ENCODE measurements at regions of chr5 and their contacts with region 1.

Region 1: DNA sequence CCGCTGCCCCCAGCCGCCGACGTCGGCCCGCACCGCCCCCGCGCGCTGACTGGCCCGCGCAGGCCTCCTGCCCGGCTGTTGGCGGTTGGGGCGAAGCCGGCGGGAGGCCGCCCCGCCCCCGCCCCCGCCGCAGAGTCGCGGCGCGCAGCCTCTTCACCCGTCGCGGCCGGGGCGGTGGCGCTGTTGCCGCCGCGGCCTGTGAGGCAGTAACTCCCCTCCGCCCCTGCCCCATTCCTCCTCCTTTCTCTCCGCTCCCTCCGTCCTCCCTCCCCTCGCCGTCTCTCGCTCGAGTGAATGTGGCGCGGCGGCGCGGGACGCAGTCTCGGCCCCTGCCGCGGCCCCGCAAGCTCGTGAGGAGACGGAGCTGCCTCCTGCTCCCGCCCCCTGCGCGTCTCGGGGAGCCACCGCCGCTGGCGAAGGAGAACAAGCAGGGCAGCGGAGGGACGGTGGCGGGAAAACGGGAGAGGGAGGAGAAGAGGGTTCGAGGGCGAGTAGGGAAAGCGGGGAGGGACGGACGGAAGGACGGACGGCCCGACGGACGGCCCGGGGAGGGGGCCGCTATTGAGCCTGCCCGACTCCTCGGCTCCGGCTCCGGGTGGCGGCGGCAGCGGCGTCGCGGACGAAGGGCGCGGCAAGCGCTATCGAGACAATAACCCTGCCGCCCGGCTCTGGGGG is 637 bp upstream of the ERBIN start:
- DNase-seq: peak; percentile 83 to 88 (median 84)
- H3K4me3 ChIP-seq: peak overlapping the region in 1 of 2 donors; percentile 80
- H3K4me3 Mint-ChIP-seq: peak overlapping the region; percentile 85 to 98 (median 91)
- H3K27ac ChIP-seq: peak overlapping the region; percentile 95
- H3K27ac Mint-ChIP-seq: peak overlapping the region; percentile 90 to 99 (median 95)
- H3K4me1 ChIP-seq: peaks cover 39% of the 10 kb centered on the region
- H3K4me1 Mint-ChIP-seq: peaks cover 15 to 62% (median 32%) of the 10 kb centered on the region in 4 donors
- H3K27me3 ChIP-seq: no peaks in the 10 kb centered on the region
- H3K27me3 Mint-ChIP-seq: no peaks in the 10 kb centered on the region

Region 2: DNA sequence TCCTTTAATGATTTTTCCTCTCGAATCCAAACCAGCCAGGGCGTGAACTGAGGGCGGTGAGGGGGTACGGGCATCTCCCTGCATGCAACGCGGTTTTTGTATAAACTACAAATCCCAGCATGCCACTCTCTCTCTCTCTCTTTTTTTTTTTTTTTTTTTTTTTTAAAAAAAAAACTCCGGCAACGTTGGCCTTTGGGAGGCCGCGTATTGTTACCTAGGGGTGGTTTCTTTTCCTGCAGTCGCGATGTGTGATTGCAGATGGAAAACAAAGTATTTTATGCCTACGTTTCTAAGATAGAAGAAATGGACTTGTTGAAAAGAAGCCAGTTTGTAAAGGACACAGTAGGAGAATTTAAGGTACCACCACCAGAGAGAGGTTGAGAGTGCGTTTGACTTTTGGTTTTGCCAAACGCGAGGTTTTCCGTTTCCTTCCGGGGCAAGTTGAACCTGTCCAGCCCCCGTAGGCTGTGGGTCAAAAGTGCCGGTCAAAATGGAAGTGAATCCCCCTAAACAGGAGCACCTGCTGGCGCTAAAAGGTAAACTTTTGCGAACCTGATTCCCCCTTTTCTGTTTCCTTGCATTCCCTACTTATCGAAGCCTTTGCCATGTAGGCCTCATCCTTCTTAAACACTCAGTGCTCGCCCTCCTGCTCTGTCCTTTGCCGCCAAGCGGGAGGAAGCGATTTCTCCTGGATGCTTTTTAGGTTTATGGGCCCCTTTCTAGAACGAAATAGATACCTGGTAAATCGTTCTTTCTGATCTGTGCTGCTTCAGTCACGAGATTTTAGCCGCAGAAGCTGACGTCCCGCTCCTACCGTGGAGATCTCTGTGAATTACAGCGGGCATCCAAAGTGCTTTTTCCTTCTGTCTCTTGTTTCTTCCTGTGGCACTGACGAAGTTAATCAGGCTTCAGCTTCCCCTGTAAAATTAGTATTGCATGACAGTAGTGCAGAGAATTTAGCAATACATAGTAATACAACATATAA is 300.9 kb before region 1 on chr5 and contains the starts of genes SHLD3 and TRAPPC13:
- CTCF ChIA-PET with region 1: no interaction called
- POLR2A ChIA-PET with region 1: interaction called, 6 read pairs
- intact Hi-C with region 1: loop called (anchors 1 kb)
- DNase-seq: peak; percentile 90 to 93 (median 92)
- H3K4me3 ChIP-seq: peak within 1 kb of the TSS; percentile 74 to 98
- H3K4me3 Mint-ChIP-seq: peak within 1 kb of the TSS; percentile 96 to 100 (median 99)
- H3K27ac ChIP-seq: peak within 1 kb of the TSS; percentile 79
- H3K27ac Mint-ChIP-seq: peak within 1 kb of the TSS; percentile 97 to 100 (median 99)
- H3K4me1 ChIP-seq: peaks cover 34% of the 10 kb centered on the region
- H3K4me1 Mint-ChIP-seq: peaks cover 28 to 68% (median 42%) of the 10 kb centered on the region in 4 donors
- H3K27me3 ChIP-seq: no peaks in the 10 kb centered on the region
- H3K27me3 Mint-ChIP-seq: peaks cover 2 to 3% of the 10 kb centered on the region in 2 donors
- total RNA-seq, gene SHLD3: 6.1 to 7.4 TPM
- total RNA-seq, gene TRAPPC13: 20.9 TPM

Region 3: GRCh38 chr5:65760504-65761275 is 165.0 kb before region 1 on chr5:
- CTCF ChIA-PET with region 1: interaction called, 12 read pairs
- POLR2A ChIA-PET with region 1: interaction called, 11 read pairs
- intact Hi-C with region 1: loop called (anchors 1 kb)
- DNase-seq: peak; percentile 63 to 74 (median 68)
- H3K4me3 ChIP-seq: no peak overlapping the region
- H3K4me3 Mint-ChIP-seq: no peak overlapping the region
- H3K27ac ChIP-seq: no peak overlapping the region
- H3K27ac Mint-ChIP-seq: peak overlapping the region in 3 of 7 donors; percentile 1 to 53 (median 24)
- H3K4me1 ChIP-seq: peaks cover 5% of the 10 kb centered on the region
- H3K4me1 Mint-ChIP-seq: peaks cover 3 to 12% (median 6%) of the 10 kb centered on the region in 4 donors
- H3K27me3 ChIP-seq: no peaks in the 10 kb centered on the region
- H3K27me3 Mint-ChIP-seq: no peaks in the 10 kb centered on the region

Region 4: DNA sequence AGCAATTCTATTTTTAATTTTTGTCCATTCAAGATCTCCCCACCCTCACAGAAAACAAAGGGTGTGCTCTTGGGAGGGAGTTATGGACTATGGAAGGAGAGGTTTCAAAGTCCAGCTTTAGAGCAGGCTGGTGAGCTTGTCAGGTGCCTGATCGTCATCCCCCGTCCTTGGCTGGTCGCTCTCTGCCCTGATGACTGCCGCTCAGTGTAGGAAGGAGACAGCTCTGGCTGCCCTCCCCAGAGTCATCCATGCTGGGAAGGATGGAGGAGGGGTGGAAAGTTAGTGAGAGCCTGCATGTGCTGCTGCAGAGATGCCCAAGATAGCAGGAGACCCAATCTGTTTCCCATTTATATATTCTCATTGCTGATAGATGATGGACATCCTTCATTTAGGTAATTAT is 107.1 kb before region 1 on chr5:
- CTCF ChIA-PET with region 1: no interaction called
- POLR2A ChIA-PET with region 1: no interaction called
- intact Hi-C with region 1: no loop called
- DNase-seq: no peak
- H3K4me3 ChIP-seq: no peak overlapping the region
- H3K4me3 Mint-ChIP-seq: no peak overlapping the region
- H3K27ac ChIP-seq: no peak overlapping the region
- H3K27ac Mint-ChIP-seq: no peak overlapping the region
- H3K4me1 ChIP-seq: no peaks in the 10 kb centered on the region
- H3K4me1 Mint-ChIP-seq: peaks cover 0 to 2% (median 0%) of the 10 kb centered on the region in 4 donors
- H3K27me3 ChIP-seq: no peaks in the 10 kb centered on the region
- H3K27me3 Mint-ChIP-seq: no peaks in the 10 kb centered on the region

Region 5: DNA sequence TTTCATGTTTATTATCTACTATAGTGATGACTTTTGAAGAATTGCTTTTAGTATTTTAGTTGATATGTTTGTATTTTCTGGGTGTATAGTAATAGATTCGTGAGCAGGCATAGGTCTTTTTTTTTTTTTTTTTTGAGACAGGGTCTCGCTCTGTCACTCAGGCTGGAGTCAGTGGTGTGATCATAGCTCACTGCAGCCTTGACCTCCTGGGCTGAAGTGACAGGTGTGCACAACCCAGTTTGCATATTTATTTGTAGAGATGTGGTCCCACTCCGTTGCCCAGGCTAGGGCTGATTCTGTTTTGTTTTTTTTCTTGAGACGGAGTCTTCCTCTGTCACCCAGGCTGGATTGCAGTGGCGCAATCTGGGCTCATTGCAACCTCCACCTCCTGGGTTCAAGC is 12.5 kb after region 1 on chr5:
- CTCF ChIA-PET with region 1: interaction called, 4 read pairs
- POLR2A ChIA-PET with region 1: interaction called, 8 read pairs
- intact Hi-C with region 1: loop called (anchors 1 kb)
- DNase-seq: no peak
- H3K4me3 ChIP-seq: no peak overlapping the region
- H3K4me3 Mint-ChIP-seq: peak overlapping the region in 1 of 8 donors; percentile 63
- H3K27ac ChIP-seq: no peak overlapping the region
- H3K27ac Mint-ChIP-seq: peak overlapping the region in 3 of 7 donors; percentile 45 to 73 (median 67)
- H3K4me1 ChIP-seq: peaks cover 61% of the 10 kb centered on the region
- H3K4me1 Mint-ChIP-seq: peaks cover 25 to 61% (median 46%) of the 10 kb centered on the region in 4 donors
- H3K27me3 ChIP-seq: no peaks in the 10 kb centered on the region
- H3K27me3 Mint-ChIP-seq: no peaks in the 10 kb centered on the region

Region 6: GRCh38 chr5:65984098-65984885 is 58.6 kb after region 1 on chr5:
- CTCF ChIA-PET with region 1: no interaction called
- POLR2A ChIA-PET with region 1: interaction called, 5 read pairs
- intact Hi-C with region 1: loop called (anchors 5 kb)
- DNase-seq: no peak
- H3K4me3 ChIP-seq: no peak overlapping the region
- H3K4me3 Mint-ChIP-seq: peak overlapping the region in 2 of 8 donors; percentile 12 to 53
- H3K27ac ChIP-seq: no peak overlapping the region
- H3K27ac Mint-ChIP-seq: peak overlapping the region in 4 of 7 donors; percentile 19 to 70 (median 67)
- H3K4me1 ChIP-seq: peaks cover 75% of the 10 kb centered on the region
- H3K4me1 Mint-ChIP-seq: peaks cover 18 to 82% (median 62%) of the 10 kb centered on the region in 4 donors
- H3K27me3 ChIP-seq: no peaks in the 10 kb centered on the region
- H3K27me3 Mint-ChIP-seq: no peaks in the 10 kb centered on the region

Region 7: DNA sequence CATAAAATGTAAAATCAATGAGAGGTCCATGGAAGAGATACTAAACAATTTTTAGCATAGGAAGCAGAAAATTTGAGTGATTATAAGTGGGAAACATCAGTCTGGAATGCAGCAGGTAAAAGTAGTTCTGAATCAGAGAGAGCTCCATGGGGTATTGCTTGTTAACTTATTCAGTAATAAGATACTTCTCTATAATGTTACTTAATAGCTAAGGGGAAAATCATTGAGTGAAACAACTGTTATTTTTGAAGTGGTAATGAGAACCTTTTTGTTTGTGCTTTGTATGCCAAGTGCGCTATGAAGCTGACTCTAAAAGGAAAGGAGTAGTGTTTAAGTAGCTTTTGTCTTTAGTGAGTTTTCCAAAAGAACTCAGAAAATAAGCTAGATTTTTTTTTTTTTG is 95.8 kb after region 1 on chr5:
- CTCF ChIA-PET with region 1: interaction called, 3 read pairs
- POLR2A ChIA-PET with region 1: interaction called, 10 read pairs
- intact Hi-C with region 1: no loop called
- DNase-seq: no peak
- H3K4me3 ChIP-seq: no peak overlapping the region
- H3K4me3 Mint-ChIP-seq: no peak overlapping the region
- H3K27ac ChIP-seq: no peak overlapping the region
- H3K27ac Mint-ChIP-seq: peak overlapping the region in 1 of 7 donors; percentile 28
- H3K4me1 ChIP-seq: peaks cover 11% of the 10 kb centered on the region
- H3K4me1 Mint-ChIP-seq: peaks cover 9 to 26% (median 24%) of the 10 kb centered on the region in 4 donors
- H3K27me3 ChIP-seq: no peaks in the 10 kb centered on the region
- H3K27me3 Mint-ChIP-seq: no peaks in the 10 kb centered on the region

Region 8: GRCh38 chr5:66171349-66172344 is 245.9 kb after region 1 on chr5:
- CTCF ChIA-PET with region 1: no interaction called
- POLR2A ChIA-PET with region 1: no interaction called
- intact Hi-C with region 1: loop called (anchors 2 kb)
- DNase-seq: peak; percentile 68 to 81 (median 78)
- H3K4me3 ChIP-seq: no peak overlapping the region
- H3K4me3 Mint-ChIP-seq: peak overlapping the region in 3 of 8 donors; percentile 18 to 53 (median 26)
- H3K27ac ChIP-seq: peak overlapping the region; percentile 43
- H3K27ac Mint-ChIP-seq: peak overlapping the region; percentile 86 to 96 (median 90)
- H3K4me1 ChIP-seq: peaks cover 14% of the 10 kb centered on the region
- H3K4me1 Mint-ChIP-seq: peaks cover 18 to 33% (median 20%) of the 10 kb centered on the region in 4 donors
- H3K27me3 ChIP-seq: no peaks in the 10 kb centered on the region
- H3K27me3 Mint-ChIP-seq: no peaks in the 10 kb centered on the region

Measured in CD4-positive, alpha-beta memory T cell (primary cell).